ENCODE measurements at regions of chr7 and their contacts with region 1.

Region 1: GRCh38 chr7:143279186-143280098 is 5.3 kb upstream of the TMEM139 start:
- DNase-seq: peak in 3 of 14 experiments; percentile 56 to 78 (median 67)
- ATAC-seq: peak; percentile 84
- H3K4me3 ChIP-seq: peak overlapping the region; percentile 28
- H3K4me3 Mint-ChIP-seq: peak overlapping the region; percentile 78
- H3K27ac ChIP-seq: peak overlapping the region; percentile 37 to 74
- H3K27ac Mint-ChIP-seq: peak overlapping the region; percentile 88
- H3K4me1 ChIP-seq: peaks cover 30% of the 10 kb centered on the region
- H3K4me1 Mint-ChIP-seq: peaks cover 42% of the 10 kb centered on the region
- H3K27me3 ChIP-seq: no peaks in the 10 kb centered on the region
- H3K27me3 Mint-ChIP-seq: no peaks in the 10 kb centered on the region
- CTCF ChIP-seq: no peak

Region 2: GRCh38 chr7:143263266-143264195 is 15.9 kb before region 1 on chr7 and contains the start of gene GSTK1:
- CTCF ChIA-PET with region 1: interaction called, 7 read pairs
- POLR2A ChIA-PET with region 1: interaction called, 41 read pairs
- intact Hi-C with region 1: loop called in 1 of 2 experiments (anchors 2 kb)
- DNase-seq: peak; percentile 53 to 87 (median 77)
- ATAC-seq: peak; percentile 96
- H3K4me3 ChIP-seq: peak within 1 kb of the TSS; percentile 98
- H3K4me3 Mint-ChIP-seq: peak within 1 kb of the TSS; percentile 98
- H3K27ac ChIP-seq: peak within 1 kb of the TSS; percentile 74
- H3K27ac Mint-ChIP-seq: peak within 1 kb of the TSS; percentile 95
- H3K4me1 ChIP-seq: peaks cover 49% of the 10 kb centered on the region
- H3K4me1 Mint-ChIP-seq: peaks cover 64% of the 10 kb centered on the region
- H3K27me3 ChIP-seq: no peaks in the 10 kb centered on the region
- H3K27me3 Mint-ChIP-seq: no peaks in the 10 kb centered on the region
- CTCF ChIP-seq: no peak
- total RNA-seq, gene GSTK1: 245 to 259 TPM

Region 3: DNA sequence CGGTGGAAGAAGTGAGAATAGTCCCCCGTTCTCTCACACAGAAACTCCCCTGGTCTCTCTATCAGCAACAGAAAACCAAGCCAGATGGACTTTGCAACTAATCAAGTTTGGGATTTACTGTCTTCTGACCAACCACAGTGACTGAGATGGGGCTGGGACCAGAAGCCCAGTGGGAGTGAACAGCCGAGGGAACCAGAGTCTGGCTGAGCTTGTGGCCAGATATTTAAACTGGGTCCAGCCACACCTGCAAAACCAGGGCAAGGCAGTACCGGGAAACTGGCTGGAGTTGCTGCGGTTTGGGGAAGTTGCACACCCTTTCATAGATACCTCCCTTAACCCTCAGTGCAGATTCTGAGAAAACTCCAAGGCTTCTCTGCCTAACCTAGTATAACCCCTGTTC is 10.2 kb before region 1 on chr7:
- CTCF ChIA-PET with region 1: interaction called, 7 read pairs
- POLR2A ChIA-PET with region 1: interaction called, 41 read pairs
- intact Hi-C with region 1: loop called in 1 of 2 experiments (anchors 2 kb)
- DNase-seq: no peak
- ATAC-seq: no peak
- H3K4me3 ChIP-seq: no peak overlapping the region
- H3K4me3 Mint-ChIP-seq: no peak overlapping the region
- H3K27ac ChIP-seq: no peak overlapping the region
- H3K27ac Mint-ChIP-seq: peak overlapping the region; percentile 43
- H3K4me1 ChIP-seq: peaks cover 31% of the 10 kb centered on the region
- H3K4me1 Mint-ChIP-seq: peaks cover 37% of the 10 kb centered on the region
- H3K27me3 ChIP-seq: no peaks in the 10 kb centered on the region
- H3K27me3 Mint-ChIP-seq: no peaks in the 10 kb centered on the region
- CTCF ChIP-seq: no peak

Region 4: DNA sequence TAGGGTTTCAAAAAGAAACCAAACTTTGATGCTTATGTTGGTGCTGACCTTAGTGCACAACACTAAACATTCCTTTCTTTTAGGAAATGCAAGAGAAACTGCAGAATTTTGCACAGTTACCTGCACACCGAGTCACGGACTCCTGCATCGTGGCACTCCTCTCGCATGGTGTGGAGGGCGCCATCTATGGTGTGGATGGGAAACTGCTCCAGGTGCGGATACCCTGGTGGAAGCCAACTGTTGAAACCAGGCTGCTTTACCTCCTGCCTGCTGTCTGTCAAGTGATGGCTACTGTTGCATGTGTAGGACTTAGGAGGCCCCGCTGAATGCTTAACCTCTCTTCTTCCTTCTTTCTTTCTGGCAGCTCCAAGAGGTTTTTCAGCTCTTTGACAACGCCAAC is 20.4 kb after region 1 on chr7:
- CTCF ChIA-PET with region 1: interaction called, 21 read pairs
- POLR2A ChIA-PET with region 1: interaction called, 3 read pairs
- intact Hi-C with region 1: no loop called
- DNase-seq: peak; percentile 52 to 83 (median 67)
- ATAC-seq: peak; percentile 100
- H3K4me3 ChIP-seq: no peak overlapping the region
- H3K4me3 Mint-ChIP-seq: no peak overlapping the region
- H3K27ac ChIP-seq: no peak overlapping the region
- H3K27ac Mint-ChIP-seq: no peak overlapping the region
- H3K4me1 ChIP-seq: peaks cover 11% of the 10 kb centered on the region
- H3K4me1 Mint-ChIP-seq: peaks cover 40% of the 10 kb centered on the region
- H3K27me3 ChIP-seq: no peaks in the 10 kb centered on the region
- H3K27me3 Mint-ChIP-seq: no peaks in the 10 kb centered on the region
- CTCF ChIP-seq: peak; percentile 70

Region 5: DNA sequence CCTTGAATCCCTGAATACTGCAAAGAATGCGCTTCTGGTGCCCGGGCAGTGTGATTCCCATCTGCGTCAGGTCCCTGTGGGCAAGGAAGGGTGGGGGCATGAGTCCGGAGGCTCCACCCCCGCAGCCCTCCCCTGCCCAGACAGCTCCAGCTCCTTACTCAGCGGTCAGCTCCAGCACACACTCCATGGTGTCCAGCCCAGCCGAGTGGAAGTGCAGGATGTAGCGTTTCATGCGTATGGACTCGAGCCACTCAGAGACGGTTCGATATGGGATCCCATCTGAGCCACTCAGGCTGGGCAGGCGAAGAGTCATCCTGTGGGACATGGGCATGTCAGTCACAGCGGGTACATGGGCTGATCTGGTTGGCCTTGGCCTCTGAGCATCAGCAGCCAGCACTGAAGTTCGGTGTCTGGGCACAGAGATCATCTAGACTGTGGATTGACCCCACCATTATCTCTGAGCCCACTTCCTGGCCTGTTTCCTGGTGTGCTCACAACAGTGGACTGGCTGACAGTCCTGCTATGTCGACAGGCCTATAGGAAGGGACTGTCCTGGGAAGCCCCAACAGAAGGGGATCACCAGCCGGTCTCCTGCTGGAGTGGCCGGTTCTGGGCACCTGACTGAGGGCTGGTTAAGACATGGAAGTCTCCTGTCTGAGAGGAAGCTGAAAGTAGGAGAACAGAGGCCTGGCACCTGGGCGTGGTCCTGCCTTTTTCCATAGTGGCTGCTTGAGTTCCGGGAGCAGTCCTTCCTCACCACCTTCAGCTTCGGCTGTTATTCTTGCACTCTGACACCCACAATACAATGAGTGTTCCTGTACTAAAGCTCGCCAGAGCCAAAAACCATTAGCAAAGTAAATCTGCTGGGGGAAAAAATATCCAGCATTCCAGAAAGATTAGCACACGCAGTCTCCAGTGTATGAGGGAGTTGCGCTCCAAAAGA is 112.3 kb after region 1 on chr7:
- CTCF ChIA-PET with region 1: no interaction called
- POLR2A ChIA-PET with region 1: no interaction called
- intact Hi-C with region 1: no loop called
- DNase-seq: no peak
- ATAC-seq: no peak
- H3K4me3 ChIP-seq: no peak overlapping the region
- H3K4me3 Mint-ChIP-seq: no peak overlapping the region
- H3K27ac ChIP-seq: no peak overlapping the region
- H3K27ac Mint-ChIP-seq: peak overlapping the region; percentile 14
- H3K4me1 ChIP-seq: peaks cover 28% of the 10 kb centered on the region
- H3K4me1 Mint-ChIP-seq: peaks cover 19% of the 10 kb centered on the region
- H3K27me3 ChIP-seq: no peaks in the 10 kb centered on the region
- H3K27me3 Mint-ChIP-seq: no peaks in the 10 kb centered on the region
- CTCF ChIP-seq: no peak